HCT116 (cell line): ENCODE measurements at regions of chr10 and their contacts with region 1.

Region 1: DNA sequence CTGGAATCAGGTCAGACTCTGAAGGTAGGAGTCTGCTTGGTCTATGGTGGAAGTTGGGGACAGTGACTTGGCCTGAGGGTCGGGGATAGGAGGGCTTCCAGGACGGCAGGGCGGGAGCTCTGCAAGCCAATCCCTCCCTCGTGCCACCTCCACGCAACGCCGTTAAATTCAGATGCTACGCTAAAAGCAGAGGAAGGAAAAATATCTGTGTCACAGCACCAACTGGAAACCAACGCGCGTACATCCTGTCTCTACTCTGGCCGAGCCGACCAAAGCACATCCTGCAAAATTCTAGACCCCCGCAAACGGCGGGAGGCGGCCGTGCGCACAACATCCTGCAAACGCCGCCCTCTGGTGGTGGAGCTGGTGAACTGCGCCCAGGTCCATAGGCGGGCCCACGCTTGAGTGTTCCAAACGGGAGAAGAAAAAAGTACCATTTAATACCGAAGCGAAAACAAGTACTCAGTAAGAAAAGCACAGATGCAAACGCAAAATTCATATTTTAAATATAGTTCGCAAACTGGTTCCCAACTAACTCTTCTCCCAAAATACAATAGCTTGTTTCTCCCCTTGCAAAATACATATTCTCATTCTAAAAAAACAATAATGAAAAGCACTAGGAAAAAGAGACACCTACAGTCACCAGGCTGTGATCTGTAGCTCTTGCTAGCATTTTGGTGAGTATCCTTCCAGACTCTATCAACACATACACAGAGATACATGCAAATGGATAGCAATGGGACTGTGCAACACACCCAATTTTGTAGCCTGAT is 45.7 kb upstream of the HSPA12A start:
- DNase-seq: peak; percentile 58
- ATAC-seq: peak; percentile 91
- H3K4me3 ChIP-seq: peak overlapping the region; percentile 13 to 36; a peak in 3 of 4 replicates
- H3K27ac ChIP-seq: no peak overlapping the region
- H3K4me1 ChIP-seq: peaks cover 4 to 21% of the 10 kb centered on the region in 2 experiments; a peak in 3 of 4 replicates
- H3K27me3 ChIP-seq: no peaks in the 10 kb centered on the region
- CTCF ChIP-seq: peak; percentile 97 to 100 (median 99)
- POLR2A ChIP-seq: no peak
- RAD21 ChIP-seq: peak; percentile 98

Region 2: DNA sequence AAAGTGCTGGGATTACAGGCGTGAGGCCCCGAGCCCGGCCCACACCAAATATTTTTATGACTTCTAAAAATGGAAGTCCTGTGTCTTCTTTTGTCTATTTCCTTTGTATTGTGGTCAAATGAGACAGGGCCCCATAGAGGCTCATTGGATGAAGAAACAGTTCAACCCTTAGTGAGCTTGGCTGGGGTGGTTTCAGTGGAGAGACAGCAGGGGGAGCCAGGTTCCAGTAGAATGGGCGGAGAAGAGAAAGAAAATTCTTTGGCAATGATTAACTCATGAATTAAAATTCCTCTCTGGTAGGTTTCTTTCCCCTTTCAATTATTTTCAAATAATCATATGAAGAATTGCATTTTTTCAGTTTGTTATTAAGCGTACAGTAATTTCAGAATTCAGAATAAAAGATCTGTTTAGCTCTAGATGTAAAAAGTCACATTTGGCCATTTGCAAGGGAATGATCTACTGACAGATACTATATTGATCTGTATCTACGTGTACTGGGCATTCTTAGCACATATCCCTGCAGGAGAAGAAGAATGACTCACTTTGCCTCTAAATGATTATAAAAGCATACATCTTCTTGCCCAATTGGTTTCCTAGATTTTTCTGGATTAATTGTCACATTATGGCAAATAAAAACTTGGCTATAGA is 317.2 kb before region 1 on chr10:
- CTCF ChIA-PET with region 1: interaction called, 10 read pairs
- POLR2A ChIA-PET with region 1: no interaction called
- RAD21 ChIA-PET with region 1: interaction called in 1 of 2 experiments, 3 read pairs
- intact Hi-C with region 1: loop called (anchors 2 kb)
- DNase-seq: peak; percentile 33
- ATAC-seq: peak; percentile 99
- H3K4me3 ChIP-seq: no peak overlapping the region
- H3K27ac ChIP-seq: no peak overlapping the region
- H3K4me1 ChIP-seq: peaks cover 0 to 5% of the 10 kb centered on the region in 2 experiments; a peak in 2 of 4 replicates
- H3K27me3 ChIP-seq: peaks cover 15% of the 10 kb centered on the region
- CTCF ChIP-seq: peak; percentile 72 to 90 (median 84)
- POLR2A ChIP-seq: no peak
- RAD21 ChIP-seq: peak; percentile 79

Region 3: GRCh38 chr10:116627386-116627933 is 160.6 kb before region 1 on chr10:
- CTCF ChIA-PET with region 1: interaction called, 56 read pairs
- POLR2A ChIA-PET with region 1: no interaction called
- RAD21 ChIA-PET with region 1: interaction called, 5 to 11 read pairs
- intact Hi-C with region 1: loop called (anchors 1 kb)
- DNase-seq: peak; percentile 29
- ATAC-seq: peak; percentile 96
- H3K4me3 ChIP-seq: peak overlapping the region; percentile 38 to 50
- H3K27ac ChIP-seq: no peak overlapping the region
- H3K4me1 ChIP-seq: peaks cover 0 to 8% of the 10 kb centered on the region in 2 experiments; a peak in 1 of 4 replicates
- H3K27me3 ChIP-seq: no peaks in the 10 kb centered on the region
- CTCF ChIP-seq: peak; percentile 68 to 90 (median 76)
- POLR2A ChIP-seq: no peak
- RAD21 ChIP-seq: peak; percentile 94

Region 4: DNA sequence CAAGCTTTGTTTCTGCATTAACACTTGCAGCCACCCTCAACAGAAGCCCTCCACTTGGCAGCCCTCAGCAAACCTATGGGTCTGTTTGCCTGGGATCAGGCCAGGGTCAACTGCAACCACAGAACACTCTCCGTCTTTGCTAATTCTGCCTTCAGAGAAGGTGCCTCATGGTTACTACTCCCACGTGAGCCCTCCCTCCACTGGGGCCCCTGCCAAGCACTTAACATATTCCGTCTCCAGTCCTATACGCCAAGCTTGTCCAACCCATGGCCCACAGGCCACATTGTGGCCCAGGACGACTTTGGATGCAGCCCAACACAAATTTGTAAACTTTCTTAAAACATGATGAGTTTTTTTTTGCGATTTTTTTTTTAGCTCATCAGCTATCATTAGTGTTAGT is 100.4 kb before region 1 on chr10:
- CTCF ChIA-PET with region 1: interaction called, 60 read pairs
- POLR2A ChIA-PET with region 1: no interaction called
- RAD21 ChIA-PET with region 1: interaction called, 3 to 6 read pairs
- intact Hi-C with region 1: loop called (anchors 1 kb)
- DNase-seq: no peak
- ATAC-seq: no peak
- H3K4me3 ChIP-seq: no peak overlapping the region
- H3K27ac ChIP-seq: no peak overlapping the region
- H3K4me1 ChIP-seq: no peaks in the 10 kb centered on the region
- H3K27me3 ChIP-seq: no peaks in the 10 kb centered on the region
- CTCF ChIP-seq: no peak
- POLR2A ChIP-seq: no peak
- RAD21 ChIP-seq: no peak

Region 5: GRCh38 chr10:116771101-116771958 is 16.7 kb before region 1 on chr10:
- CTCF ChIA-PET with region 1: interaction called, 48 read pairs
- POLR2A ChIA-PET with region 1: no interaction called
- RAD21 ChIA-PET with region 1: no interaction called
- intact Hi-C with region 1: no loop called
- DNase-seq: no peak
- ATAC-seq: no peak
- H3K4me3 ChIP-seq: no peak overlapping the region
- H3K27ac ChIP-seq: no peak overlapping the region
- H3K4me1 ChIP-seq: peaks cover 12 to 21% of the 10 kb centered on the region in 2 experiments
- H3K27me3 ChIP-seq: peaks cover 6% of the 10 kb centered on the region; the same call in 1 of the 2 replicates
- CTCF ChIP-seq: no peak
- POLR2A ChIP-seq: no peak
- RAD21 ChIP-seq: no peak